Cardiac septum (tissue), 1 donor: ENCODE measurements at regions of chr2 and their contacts with region 1.

Region 1: DNA sequence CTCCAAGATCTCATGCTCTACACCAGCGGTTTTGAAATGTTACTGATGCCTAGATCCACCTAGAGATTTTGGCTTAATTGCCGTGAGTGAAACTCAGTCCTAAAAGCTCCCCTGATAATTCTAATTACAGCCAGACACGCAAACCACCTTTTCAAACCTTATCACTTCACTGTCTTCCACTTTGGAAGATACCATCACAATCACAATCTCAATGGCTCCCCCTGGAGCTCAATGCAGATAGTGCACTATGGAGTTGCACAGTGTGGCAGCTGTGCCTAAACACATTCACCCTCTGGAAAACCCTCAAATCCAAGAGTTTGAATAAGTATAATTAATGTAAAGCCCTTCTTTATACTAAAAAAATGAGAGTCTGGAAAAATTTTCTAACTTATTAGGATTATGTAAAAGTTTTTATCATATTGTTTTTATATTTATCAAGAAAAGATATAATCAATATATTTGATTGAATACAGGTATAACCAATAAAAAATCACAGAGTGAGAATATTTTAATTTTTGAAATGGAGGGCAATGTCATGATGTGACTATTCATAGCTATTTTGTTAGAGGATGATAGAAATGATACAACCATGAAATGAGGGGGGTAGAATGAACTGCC is 102.9 kb upstream of the SLC8A1 start:
- DNase-seq: peak; percentile 83

Region 2: DNA sequence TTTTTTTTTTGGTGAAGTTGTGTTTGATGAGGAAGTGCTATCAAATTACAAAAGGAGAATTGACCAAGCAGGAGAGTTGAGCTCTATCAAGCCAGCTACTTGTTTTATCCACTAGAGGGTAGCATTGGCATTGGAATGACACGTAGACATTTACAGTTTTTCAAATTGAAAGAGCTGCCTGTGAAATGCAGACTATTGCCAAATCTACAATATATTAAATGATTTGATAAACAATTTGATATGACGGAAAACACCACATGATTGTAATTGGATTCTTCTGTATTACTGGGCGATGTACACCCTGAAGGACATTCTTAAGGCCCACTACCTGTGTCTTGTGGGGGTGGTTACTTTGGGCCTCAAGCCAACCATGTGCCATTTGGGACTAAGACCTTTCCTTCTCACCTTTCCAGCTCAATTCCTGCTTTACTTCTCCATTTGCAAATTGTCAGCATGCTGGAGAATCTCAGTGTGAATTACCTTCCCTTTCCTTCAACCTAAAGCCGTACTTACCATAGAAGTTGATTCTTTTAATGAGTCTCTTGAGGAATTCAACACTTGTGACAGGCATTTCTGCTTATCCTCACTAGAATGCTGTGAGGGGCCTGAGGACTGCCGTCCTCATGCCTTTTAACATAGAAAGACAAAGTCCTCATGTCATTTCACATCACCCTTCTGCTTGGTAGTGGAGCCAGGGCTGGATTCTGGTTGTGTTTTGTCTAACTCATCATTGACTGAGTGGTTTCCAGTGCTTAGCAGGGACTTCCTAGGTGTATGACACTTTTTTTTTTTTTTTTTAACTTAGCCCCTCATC is 640.9 kb before region 1 on chr2:
- intact Hi-C with region 1: loop called (anchors 5 kb)
- DNase-seq: no peak

Region 3: DNA sequence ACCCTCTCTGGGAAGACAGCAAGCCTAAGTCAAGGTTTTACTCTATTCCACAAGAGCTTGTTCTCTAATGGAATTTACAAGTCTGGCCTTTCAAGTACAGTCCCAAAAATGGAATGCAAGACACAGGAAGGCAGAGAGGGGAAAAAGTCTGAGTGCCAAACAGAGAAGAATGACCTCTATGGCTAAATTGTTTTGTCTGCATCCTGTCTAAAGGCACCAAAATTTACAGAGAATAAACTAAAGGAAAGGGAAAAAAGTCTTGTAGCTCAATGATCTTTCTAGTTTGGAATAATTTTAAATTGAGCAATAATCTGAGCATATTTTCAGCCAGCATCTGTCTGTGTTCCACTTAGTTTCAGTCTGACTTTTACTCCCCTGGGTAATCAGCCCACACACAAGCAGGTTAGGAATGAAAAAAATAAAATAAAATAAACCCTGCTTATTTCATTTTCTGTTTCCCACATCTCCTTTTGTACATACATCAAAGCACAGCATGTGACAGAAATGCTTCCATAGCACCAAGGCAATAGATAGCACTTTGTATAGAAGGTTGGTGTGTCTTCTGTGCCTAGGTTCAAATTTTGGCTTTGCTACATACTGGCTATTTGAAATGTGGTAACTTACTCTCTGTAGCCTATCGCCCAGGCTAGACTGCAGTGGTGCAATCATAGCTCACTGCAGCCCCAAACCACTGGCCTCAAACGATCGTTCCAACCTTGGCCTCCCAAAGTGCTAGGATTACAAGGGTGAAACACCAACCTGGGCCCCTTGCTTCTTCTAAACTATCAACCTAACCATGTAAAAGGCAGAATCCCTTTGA is 208.0 kb before region 1 on chr2:
- intact Hi-C with region 1: loop called (anchors 5 kb)
- DNase-seq: no peak

Region 4: DNA sequence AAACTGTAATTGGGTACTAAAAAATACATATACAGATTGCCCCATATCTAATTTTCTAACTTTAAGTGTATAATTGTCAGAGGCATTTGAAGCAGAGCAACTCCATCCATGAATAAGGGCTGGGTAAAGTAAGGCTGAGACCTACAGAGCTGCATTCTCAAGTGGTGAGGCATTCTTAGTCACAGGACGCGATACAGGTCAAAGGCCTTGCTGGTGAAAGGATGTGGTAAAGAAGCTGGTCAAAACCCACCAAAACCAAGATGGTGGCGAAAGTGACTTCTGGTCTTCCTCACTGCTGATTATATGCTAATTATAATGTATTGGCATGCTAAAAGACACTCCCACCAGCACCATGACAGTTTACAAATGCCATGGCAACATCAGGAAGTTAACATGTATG is 152.9 kb before region 1 on chr2:
- intact Hi-C with region 1: no loop called
- DNase-seq: no peak

Region 5: GRCh38 chr2:40511661-40512213 is 43.0 kb before region 1 on chr2:
- intact Hi-C with region 1: loop called (anchors 1 kb)
- DNase-seq: peak; percentile 74

Region 6: GRCh38 chr2:40721595-40721994 is 166.8 kb after region 1 on chr2:
- intact Hi-C with region 1: no loop called
- DNase-seq: no peak

Region 7: GRCh38 chr2:40760071-40760666 is 205.4 kb after region 1 on chr2:
- intact Hi-C with region 1: loop called (anchors 10 kb)
- DNase-seq: no peak